GM10248 (cell line): ENCODE measurements at regions of chr22 and their contacts with region 1.

Region 1: GRCh38 chr22:36301384-36301828 is 48.5 kb downstream of the APOL1 start:
- DNase-seq: peak; percentile 86
- CTCF ChIP-seq: peak; percentile 92

Region 2: GRCh38 chr22:35866651-35867050 is 434.8 kb before region 1 on chr22:
- CTCF ChIA-PET with region 1: no interaction called
- POLR2A ChIA-PET with region 1: no interaction called
- DNase-seq: no peak
- CTCF ChIP-seq: no peak

Region 3: DNA sequence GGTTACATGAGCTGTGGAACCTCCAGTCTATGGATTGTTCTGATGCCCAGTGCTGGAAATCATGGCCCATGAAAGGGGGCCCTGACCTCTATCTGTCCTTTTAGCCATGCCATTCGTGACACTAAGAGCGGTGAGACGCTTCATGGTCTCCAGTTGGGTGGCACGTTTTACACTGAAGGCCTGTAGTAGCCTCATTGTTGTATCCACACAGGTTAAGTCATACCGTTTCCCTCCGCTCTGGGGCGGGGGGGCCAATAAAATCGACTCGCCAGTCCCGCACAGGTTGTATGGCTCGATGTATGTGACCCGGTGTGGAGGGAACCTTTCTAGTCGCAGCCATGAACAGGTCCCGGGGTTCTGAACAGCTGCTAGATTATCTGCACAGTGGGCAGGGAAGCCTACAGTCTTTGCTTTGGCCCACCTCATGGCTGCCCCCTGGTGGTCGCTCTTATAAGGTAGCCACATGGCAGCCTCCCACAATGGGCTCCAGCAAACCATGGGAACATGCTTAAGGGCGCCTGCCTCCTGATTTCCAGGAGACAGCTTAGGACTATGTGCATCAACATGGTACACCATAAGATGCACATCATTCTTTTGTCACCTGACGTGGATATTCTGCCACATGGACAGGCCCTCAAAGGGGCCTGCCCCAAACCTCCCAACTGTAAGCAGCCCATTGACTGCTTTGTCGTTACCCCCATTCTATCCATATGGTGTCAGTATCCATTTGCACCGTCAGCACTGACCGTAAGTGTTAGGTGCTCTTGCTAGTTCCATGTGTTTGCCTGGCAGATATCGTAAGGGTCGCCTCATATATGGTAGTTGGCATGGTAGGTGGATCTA is 121.1 kb before region 1 on chr22:
- CTCF ChIA-PET with region 1: no interaction called
- POLR2A ChIA-PET with region 1: no interaction called
- DNase-seq: peak; percentile 87
- CTCF ChIP-seq: peak; percentile 85

Region 4: GRCh38 chr22:36286471-36287224 is 14.8 kb before region 1 on chr22:
- CTCF ChIA-PET with region 1: interaction called, 46 read pairs
- POLR2A ChIA-PET with region 1: interaction called, 4 read pairs
- DNase-seq: peak; percentile 82
- CTCF ChIP-seq: peak; percentile 92

Region 5: GRCh38 chr22:36319589-36320497 is 18.4 kb after region 1 on chr22:
- CTCF ChIA-PET with region 1: interaction called, 40 read pairs
- POLR2A ChIA-PET with region 1: no interaction called
- DNase-seq: no peak
- CTCF ChIP-seq: no peak

Region 6: DNA sequence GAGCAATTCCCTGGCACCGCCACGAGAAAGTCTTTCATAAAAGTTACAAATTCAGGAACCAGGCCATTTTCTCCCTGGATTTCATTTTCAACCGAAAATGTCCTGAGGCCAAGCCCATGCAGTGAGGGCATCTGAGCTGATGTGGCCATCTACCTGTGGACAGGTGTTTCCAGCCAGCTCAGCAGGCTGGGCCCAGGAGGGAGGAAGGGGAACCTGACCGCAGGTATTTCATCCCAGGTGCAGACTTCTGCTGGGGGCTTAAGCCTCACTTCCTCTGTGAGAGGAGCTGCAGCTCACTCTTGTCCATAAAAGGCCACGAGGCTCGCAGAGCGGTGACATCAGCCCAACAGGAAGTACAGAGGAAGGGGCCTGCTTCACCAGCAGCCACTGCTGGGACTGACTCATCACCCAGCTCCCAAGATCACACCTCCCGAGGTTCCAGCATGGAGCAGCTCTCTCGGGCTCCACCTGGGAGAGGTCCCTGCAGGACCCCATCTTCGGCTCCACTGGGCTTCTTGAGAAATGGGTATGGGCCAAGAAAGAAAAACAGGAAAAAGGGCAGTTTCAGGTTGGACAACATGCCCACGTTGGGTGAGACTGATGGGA is 30.0 kb after region 1 on chr22:
- CTCF ChIA-PET with region 1: interaction called, 22 read pairs
- POLR2A ChIA-PET with region 1: no interaction called
- DNase-seq: peak; percentile 87
- CTCF ChIP-seq: no peak

Region 7: GRCh38 chr22:36360871-36361383 is 59.5 kb after region 1 on chr22:
- CTCF ChIA-PET with region 1: no interaction called
- POLR2A ChIA-PET with region 1: no interaction called
- DNase-seq: no peak
- CTCF ChIP-seq: no peak

Region 8: GRCh38 chr22:36409911-36410756 is 108.7 kb after region 1 on chr22:
- CTCF ChIA-PET with region 1: no interaction called
- POLR2A ChIA-PET with region 1: no interaction called
- DNase-seq: peak; percentile 84
- CTCF ChIP-seq: no peak

Region 9: DNA sequence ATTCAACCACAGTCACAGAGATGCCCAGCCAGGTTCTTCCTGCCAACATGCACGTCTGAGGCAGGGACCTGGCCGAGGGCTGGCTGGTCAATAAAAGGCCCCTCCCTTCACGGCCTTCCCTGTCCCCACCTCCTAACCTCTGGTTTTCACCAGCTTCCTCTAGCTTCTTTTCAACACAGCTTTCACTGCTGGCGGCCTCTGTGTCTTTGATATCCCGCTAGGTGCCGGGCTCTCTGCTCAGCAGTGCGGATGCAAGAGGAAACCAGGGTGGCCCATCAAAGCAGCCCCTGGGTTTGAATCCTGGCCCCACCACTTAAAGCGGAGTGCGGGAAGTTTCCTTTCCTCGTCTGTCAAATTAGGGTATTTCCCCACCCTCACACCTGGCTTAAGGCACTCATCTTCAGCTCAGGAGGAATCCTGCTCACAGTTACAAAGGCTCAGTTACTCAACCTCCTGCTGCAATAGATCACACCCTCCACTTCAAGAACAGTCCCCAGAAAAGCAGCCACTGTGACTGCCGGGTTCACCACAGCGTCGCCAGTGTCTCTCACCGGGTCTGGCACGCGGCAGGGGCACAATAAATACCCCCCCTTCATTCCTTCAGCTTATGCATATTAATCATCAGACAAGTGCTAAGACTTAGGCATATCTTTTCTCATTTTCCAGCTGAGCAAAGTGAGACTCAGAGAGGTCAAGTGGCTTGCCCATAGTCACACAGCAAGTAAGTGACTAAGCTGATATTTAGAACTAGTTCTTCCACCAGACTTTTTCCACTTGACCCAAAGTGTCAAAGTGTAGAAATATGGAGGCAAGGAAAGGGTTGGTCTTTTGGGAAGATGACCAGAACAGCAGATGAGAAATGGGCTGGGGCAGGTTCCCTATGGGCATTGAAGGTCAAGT is 134.4 kb after region 1 on chr22:
- CTCF ChIA-PET with region 1: interaction called, 15 read pairs
- POLR2A ChIA-PET with region 1: no interaction called
- DNase-seq: peak; percentile 71
- CTCF ChIP-seq: no peak